ENCODE measurements at regions of chr17 and their contacts with region 1.

Region 1: DNA sequence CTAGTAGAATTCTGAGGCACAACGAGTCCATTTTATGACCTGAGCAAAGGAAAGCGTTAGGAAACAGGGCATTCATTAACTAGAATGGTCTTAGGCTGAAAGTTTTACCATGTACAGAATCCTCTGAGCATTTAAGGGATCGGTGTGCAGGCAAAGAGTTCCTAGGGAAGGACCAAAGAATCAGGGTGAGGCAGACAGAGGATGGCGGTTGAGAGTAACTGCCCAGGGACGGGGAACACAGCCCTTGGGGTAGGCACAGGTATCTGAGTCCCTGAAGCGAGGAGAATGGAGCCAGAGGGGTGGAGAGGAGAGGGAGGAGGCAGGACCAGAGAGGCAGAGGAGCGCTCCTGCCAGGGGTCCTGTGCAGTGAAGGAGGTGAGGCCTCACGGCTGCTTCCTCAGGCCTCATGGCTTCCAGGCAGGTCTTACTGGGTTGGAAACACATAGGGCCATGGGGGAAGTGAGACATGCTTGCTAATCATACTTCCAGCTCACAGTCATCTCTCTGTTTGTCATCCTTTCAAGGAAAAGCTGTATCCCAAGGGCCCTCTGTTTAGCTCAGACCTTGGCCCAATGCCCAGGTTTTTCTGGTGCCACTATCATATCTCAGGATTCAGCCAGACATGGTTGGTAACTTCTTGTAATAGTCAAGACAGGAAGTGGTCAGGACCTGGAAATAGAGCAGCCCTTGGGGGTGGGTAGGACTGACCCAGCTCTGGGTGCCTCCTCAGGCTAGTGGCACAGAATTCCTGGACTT is 13.8 kb upstream of the ITGB3 start:
- H3K4me3 Mint-ChIP-seq: no peak overlapping the region
- H3K27ac Mint-ChIP-seq: peak overlapping the region; percentile 80
- H3K4me1 Mint-ChIP-seq: peaks cover 26% of the 10 kb centered on the region
- H3K27me3 Mint-ChIP-seq: peaks cover 3% of the 10 kb centered on the region

Region 2: DNA sequence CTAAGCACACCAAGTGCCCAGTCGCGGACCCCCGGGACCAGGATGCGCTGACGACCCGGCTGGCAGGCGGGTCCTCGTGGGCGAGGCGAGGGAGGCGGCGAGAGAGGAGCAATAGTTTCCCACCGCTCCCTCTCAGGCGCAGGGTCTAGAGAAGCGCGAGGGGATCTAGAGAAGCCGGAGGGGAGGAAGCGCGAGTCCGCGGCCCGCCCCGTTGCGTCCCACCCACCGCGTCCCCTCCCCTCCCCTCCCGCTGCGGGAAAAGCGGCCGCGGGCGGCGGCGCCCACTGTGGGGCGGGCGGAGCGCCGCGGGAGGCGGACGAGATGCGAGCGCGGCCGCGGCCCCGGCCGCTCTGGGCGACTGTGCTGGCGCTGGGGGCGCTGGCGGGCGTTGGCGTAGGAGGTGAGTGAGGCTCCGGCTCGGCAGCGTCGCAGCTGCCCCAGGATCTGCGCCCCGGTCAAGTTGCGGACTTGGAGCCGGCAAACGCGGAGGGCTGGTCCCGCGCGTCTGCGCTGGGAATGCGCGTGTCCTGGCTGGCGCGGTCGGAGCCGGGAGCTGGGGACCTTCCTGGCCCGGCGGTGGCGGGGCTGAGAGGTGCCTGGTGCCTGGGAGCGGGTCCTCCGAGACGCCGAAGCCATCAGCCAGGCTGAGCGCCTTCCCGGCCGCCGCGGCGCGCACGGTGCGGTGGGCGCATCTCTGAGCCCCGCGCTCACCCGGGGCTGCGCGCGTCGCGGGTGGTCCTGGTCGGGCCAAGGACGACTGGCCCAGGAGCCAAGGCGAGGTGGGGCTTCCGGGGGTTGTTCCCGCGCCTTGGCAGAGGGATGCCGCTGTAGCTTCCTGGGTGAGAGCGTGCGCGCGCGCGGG is 14.0 kb after region 1 on chr17 and contains the start of gene ITGB3:
- intact Hi-C with region 1: no loop called
- H3K4me3 Mint-ChIP-seq: peak within 1 kb of the TSS; percentile 70
- H3K27ac Mint-ChIP-seq: no peak within 1 kb of the TSS
- H3K4me1 Mint-ChIP-seq: peaks cover 33% of the 10 kb centered on the region
- H3K27me3 Mint-ChIP-seq: peaks cover 74% of the 10 kb centered on the region

Region 3: DNA sequence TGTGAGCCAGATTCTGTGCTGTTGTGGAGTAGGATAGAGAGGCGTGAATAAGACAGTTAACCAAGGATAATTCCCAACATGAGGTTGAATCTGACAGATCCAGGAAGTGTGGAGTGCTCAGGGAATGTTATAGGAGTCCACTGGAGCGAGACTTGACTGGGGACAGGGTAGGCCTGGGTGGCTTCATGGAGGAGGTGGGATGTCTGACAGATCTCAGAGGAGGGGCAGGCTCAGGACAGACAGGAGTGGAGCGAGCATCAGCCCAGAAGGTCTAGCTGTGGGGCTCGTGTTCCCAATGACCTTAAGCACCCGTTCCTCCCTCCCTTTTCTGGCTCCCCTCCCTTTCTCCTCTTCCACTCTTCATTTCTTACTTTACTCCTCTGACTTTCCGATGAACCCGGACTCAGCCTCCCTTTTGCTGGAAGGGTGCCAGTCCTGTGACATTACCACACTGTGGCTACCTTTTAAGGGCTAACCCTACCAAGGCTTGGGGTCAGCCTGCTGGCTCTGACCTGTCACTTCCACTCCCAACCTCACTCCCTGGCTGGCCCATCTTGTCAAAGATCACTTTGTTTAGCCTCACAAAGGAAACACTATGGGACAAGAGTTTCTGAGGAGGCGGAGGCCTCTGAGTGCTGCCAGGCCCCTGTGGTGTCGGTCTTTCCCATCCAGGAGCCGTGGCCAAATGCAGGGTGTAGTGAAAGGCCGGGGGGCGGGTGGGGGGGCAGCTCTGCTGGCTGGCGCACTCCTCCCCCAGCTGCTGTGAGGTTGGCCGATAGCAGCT is 55.5 kb after region 1 on chr17:
- intact Hi-C with region 1: loop called (anchors 5 kb)
- H3K4me3 Mint-ChIP-seq: no peak overlapping the region
- H3K27ac Mint-ChIP-seq: no peak overlapping the region
- H3K4me1 Mint-ChIP-seq: peaks cover 11% of the 10 kb centered on the region
- H3K27me3 Mint-ChIP-seq: peaks cover 3% of the 10 kb centered on the region